ENCODE measurements at regions of chr11 and their contacts with region 1.

Region 1: GRCh38 chr11:125451400-125452124 is 44.5 kb downstream of the FEZ1 start:
- DNase-seq: peak in 1 of 2 donors; percentile 79
- H3K4me3 ChIP-seq: peak overlapping the region in 1 of 2 donors; percentile 18
- H3K27ac ChIP-seq: peak overlapping the region; percentile 53 to 59
- H3K4me1 ChIP-seq: peaks cover 0 to 8% of the 10 kb centered on the region in 2 donors
- H3K27me3 ChIP-seq: no peaks in the 10 kb centered on the region
- CTCF ChIP-seq: no peak

Region 2: GRCh38 chr11:125275905-125276618 is 175.5 kb before region 1 on chr11:
- intact Hi-C with region 1: no loop called
- DNase-seq: no peak
- H3K4me3 ChIP-seq: no peak overlapping the region
- H3K27ac ChIP-seq: peak overlapping the region in 1 of 2 donors; percentile 14
- H3K4me1 ChIP-seq: peaks cover 4 to 10% of the 10 kb centered on the region in 2 donors
- H3K27me3 ChIP-seq: no peaks in the 10 kb centered on the region
- CTCF ChIP-seq: no peak

Region 3: DNA sequence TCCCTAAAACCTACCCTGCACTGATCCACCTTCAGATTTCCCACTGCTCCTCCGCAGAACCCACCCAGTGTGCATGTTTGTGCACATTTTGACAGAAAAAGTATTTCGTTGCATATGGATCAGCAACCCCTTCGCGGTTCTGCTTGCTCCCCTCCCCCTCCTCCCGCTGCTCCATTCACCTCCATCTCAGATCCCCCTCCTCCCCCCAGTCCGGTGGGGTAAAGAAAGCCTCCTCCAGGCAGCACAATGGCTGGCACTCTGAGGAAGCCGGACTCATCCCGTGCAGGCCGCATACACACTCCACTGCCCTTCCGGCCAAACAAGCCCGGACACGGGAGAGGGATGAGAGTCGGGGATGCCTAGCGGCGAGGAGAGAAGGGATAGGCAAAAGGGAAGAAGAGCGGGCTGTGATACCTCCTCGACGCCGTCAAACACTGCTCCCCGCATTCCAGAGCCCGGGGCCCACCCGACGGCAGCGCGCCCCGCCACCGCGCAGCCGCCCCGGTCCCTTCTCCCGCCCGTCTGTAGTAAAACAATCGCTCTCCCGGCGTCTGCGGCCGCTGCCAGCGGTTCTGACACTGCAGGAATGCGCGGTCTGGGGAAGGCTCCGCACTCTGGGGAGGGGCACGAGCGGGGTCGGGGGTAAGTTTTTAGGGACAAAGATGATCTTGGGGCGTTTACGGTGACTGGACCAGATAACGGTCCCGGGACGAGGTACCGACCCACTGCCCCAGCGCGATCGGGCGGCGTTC is 43.6 kb after region 1 on chr11:
- intact Hi-C with region 1: loop called (anchors 2 kb)
- DNase-seq: peak in 1 of 2 donors; percentile 72
- H3K4me3 ChIP-seq: peak overlapping the region; percentile 63 to 98
- H3K27ac ChIP-seq: peak overlapping the region; percentile 80 to 96
- H3K4me1 ChIP-seq: peaks cover 7 to 8% of the 10 kb centered on the region in 2 donors
- H3K27me3 ChIP-seq: no peaks in the 10 kb centered on the region
- CTCF ChIP-seq: no peak